GM12878 (cell line): ENCODE measurements at regions of chr9 and their contacts with region 1.

Region 1: DNA sequence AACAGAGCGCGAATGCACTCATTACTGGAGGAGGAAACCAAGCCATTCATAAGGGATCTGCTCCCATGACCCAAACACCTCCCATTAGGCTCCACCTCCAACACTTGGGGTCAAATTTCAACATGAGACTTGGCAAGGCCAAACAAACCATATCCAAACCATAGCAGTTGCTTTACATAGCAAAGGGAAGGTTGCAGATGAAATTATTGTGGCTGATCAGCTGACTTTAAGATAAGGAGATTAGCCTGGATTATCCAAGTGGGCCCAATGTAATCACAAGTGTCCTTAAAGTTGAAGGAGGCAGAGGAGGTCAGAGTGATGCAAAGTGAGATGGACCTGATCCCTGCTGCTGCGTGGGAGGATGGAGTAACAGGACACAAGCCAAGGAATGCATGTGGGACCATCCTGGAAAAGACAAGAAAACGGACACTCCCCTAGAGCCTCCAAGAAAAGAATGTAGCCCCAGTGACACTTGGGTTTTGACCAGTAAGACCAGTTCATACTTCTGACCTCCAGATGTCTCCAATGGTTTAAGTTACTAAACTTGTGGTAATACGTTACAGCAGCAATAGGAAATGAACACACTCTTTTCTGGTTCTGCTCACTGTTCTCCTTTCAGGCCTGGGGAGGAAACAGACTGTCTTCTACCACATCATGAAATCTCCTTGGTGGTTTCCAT is 167.3 kb downstream of the GNAQ start:
- DNase-seq: no peak
- ATAC-seq: peak; percentile 92
- H3K4me3 ChIP-seq: no peak overlapping the region
- H3K27ac ChIP-seq: no peak overlapping the region
- H3K4me1 ChIP-seq: no peaks in the 10 kb centered on the region
- H3K27me3 ChIP-seq: no peaks in the 10 kb centered on the region
- CTCF ChIP-seq: peak in 2 of 3 experiments; percentile 26 to 42; a peak in 3 of 6 replicates
- EP300 ChIP-seq: no peak
- POLR2A ChIP-seq: no peak
- RAD21 ChIP-seq: peak; percentile 68

Region 2: DNA sequence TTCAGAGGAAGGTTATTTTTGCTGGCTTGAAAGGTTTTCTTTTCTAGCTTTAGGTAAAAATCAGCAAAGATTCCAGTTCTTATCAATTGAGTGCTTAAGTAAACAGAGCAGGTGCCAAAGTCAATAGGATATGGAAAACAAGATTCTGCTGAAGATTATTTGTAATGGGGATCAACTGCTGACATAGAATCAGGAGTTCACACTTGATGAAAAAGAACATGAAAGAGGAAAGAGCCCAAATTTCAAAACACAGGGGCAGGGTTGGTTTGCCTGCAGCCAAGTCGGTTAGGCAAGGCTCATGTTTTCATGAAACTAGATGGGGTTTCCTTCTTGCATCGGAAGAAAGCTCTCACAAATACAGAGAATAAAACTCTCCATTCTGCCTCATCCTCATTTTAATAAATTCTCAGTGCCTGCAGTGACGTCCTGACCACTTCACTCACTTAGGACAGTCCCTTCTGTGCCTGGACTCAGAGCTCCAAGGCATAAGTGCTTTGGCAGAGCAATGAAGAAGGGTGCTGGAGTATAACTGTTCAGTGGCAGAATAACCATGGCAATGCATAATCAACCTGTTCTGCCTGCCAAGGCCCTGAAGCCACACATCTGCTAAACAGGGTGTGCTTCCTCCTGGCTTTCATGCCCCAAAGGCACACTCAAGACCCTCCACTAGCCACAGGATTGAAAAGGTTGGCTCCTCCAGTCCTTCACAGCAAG is 12.3 kb before region 1 on chr9:
- CTCF ChIA-PET with region 1: interaction called, 9 read pairs
- POLR2A ChIA-PET with region 1: interaction called, 6 read pairs
- RAD21 ChIA-PET with region 1: interaction called, 4 read pairs
- SMC1A ChIA-PET with region 1: interaction called, 14 read pairs
- in situ Hi-C with region 1: no loop called
- intact Hi-C with region 1: no loop called
- DNase-seq: no peak
- ATAC-seq: peak; percentile 11
- H3K4me3 ChIP-seq: no peak overlapping the region
- H3K27ac ChIP-seq: no peak overlapping the region
- H3K4me1 ChIP-seq: no peaks in the 10 kb centered on the region
- H3K27me3 ChIP-seq: no peaks in the 10 kb centered on the region; a peak in 1 of 4 replicates
- CTCF ChIP-seq: no peak
- EP300 ChIP-seq: no peak
- POLR2A ChIP-seq: no peak
- RAD21 ChIP-seq: no peak

Region 3: GRCh38 chr9:77884395-77884851 is 20.1 kb after region 1 on chr9:
- CTCF ChIA-PET with region 1: interaction called, 4 read pairs
- POLR2A ChIA-PET with region 1: no interaction called
- RAD21 ChIA-PET with region 1: interaction called, 4 read pairs
- SMC1A ChIA-PET with region 1: interaction called, 18 read pairs
- in situ Hi-C with region 1: no loop called
- intact Hi-C with region 1: no loop called
- DNase-seq: no peak
- ATAC-seq: no peak
- H3K4me3 ChIP-seq: no peak overlapping the region
- H3K27ac ChIP-seq: no peak overlapping the region
- H3K4me1 ChIP-seq: no peaks in the 10 kb centered on the region
- H3K27me3 ChIP-seq: no peaks in the 10 kb centered on the region
- CTCF ChIP-seq: no peak
- EP300 ChIP-seq: no peak
- POLR2A ChIP-seq: no peak
- RAD21 ChIP-seq: no peak

Region 4: GRCh38 chr9:78121488-78121887 is 257.1 kb after region 1 on chr9:
- CTCF ChIA-PET with region 1: interaction called, 5 read pairs
- POLR2A ChIA-PET with region 1: no interaction called
- RAD21 ChIA-PET with region 1: interaction called, 3 read pairs
- SMC1A ChIA-PET with region 1: interaction called, 4 read pairs
- in situ Hi-C with region 1: no loop called
- intact Hi-C with region 1: loop called (anchors 5 kb)
- DNase-seq: no peak
- ATAC-seq: peak; percentile 22; the same call in 1 of the 3 replicates
- H3K4me3 ChIP-seq: no peak overlapping the region
- H3K27ac ChIP-seq: no peak overlapping the region
- H3K4me1 ChIP-seq: peaks cover 7% of the 10 kb centered on the region; the same call in 1 of the 2 replicates
- H3K27me3 ChIP-seq: no peaks in the 10 kb centered on the region
- CTCF ChIP-seq: peak; percentile 49 to 57 (median 53)
- EP300 ChIP-seq: no peak
- POLR2A ChIP-seq: no peak
- RAD21 ChIP-seq: peak; percentile 70

Region 5: DNA sequence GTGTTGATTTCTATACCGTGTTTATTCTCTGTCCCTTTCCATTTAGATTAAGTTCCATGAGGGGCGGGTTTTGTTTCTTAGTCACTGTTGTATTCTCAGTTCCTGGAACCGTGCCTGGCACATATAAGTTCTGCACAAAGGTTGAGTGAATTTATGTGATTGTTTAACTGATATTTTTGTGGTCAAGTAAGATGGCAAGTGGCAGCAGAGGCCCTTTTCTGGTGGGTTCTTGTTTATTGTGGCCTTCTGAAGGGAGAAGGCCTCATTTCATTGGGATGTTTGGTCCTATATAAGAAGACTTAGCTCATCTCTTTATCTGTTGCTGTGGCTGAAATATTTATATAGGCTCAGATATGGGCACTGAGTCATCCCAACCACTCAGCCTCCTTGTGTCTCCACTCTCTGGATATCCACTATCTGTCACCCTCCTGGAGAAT is 695.1 kb after region 1 on chr9:
- CTCF ChIA-PET with region 1: no interaction called
- POLR2A ChIA-PET with region 1: no interaction called
- RAD21 ChIA-PET with region 1: no interaction called
- SMC1A ChIA-PET with region 1: no interaction called
- in situ Hi-C with region 1: no loop called
- intact Hi-C with region 1: no loop called
- DNase-seq: no peak
- ATAC-seq: no peak
- H3K4me3 ChIP-seq: no peak overlapping the region
- H3K27ac ChIP-seq: no peak overlapping the region
- H3K4me1 ChIP-seq: no peaks in the 10 kb centered on the region
- H3K27me3 ChIP-seq: no peaks in the 10 kb centered on the region
- CTCF ChIP-seq: no peak
- EP300 ChIP-seq: no peak
- POLR2A ChIP-seq: no peak
- RAD21 ChIP-seq: no peak